ENCODE measurements at regions of chr9 and their contacts with region 1.

Region 1: GRCh38 chr9:104927912-104928740 is at the start of gene ABCA1:
- DNase-seq: peak; percentile 86
- H3K4me3 Mint-ChIP-seq: peak within 1 kb of the TSS; percentile 82
- H3K27ac Mint-ChIP-seq: peak within 1 kb of the TSS; percentile 49
- H3K4me1 Mint-ChIP-seq: peaks cover 9% of the 10 kb centered on the region
- H3K27me3 Mint-ChIP-seq: peaks cover 12% of the 10 kb centered on the region
- total RNA-seq, gene ABCA1: 6.1 TPM

Region 2: DNA sequence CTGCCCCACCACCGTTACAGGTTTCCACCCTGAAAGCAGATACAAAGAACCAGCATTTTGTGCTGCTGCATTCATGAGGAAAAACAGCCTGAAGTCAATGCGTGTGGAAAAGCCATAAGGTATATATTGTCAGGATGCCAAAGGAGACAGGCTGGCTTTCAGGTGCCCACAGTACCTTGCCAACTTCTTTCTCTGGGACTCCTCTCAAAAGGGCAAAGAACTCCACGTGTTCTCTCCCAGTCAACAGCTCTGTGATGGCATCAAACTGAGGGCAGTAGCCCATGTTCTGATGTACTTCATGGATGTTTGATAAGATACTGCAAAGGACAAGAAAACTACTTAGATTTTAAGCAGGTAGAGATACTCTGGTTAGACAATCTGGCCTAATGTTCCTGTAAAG is 139.9 kb before region 1 on chr9:
- CTCF ChIA-PET with region 1: no interaction called
- POLR2A ChIA-PET with region 1: no interaction called
- intact Hi-C with region 1: no loop called
- DNase-seq: no peak
- H3K4me3 Mint-ChIP-seq: no peak overlapping the region
- H3K27ac Mint-ChIP-seq: no peak overlapping the region
- H3K4me1 Mint-ChIP-seq: no peaks in the 10 kb centered on the region
- H3K27me3 Mint-ChIP-seq: no peaks in the 10 kb centered on the region

Region 3: GRCh38 chr9:104863180-104863883 is 64.8 kb before region 1 on chr9:
- CTCF ChIA-PET with region 1: interaction called, 3 read pairs
- POLR2A ChIA-PET with region 1: no interaction called
- intact Hi-C with region 1: loop called (anchors 10 kb)
- DNase-seq: peak; percentile 57
- H3K4me3 Mint-ChIP-seq: no peak overlapping the region
- H3K27ac Mint-ChIP-seq: no peak overlapping the region
- H3K4me1 Mint-ChIP-seq: peaks cover 3% of the 10 kb centered on the region
- H3K27me3 Mint-ChIP-seq: no peaks in the 10 kb centered on the region

Region 4: GRCh38 chr9:104961238-104961637 is 33.1 kb after region 1 on chr9:
- CTCF ChIA-PET with region 1: no interaction called
- POLR2A ChIA-PET with region 1: no interaction called
- intact Hi-C with region 1: loop called (anchors 1 kb)
- DNase-seq: peak; percentile 83
- H3K4me3 Mint-ChIP-seq: no peak overlapping the region
- H3K27ac Mint-ChIP-seq: peak overlapping the region; percentile 85
- H3K4me1 Mint-ChIP-seq: peaks cover 31% of the 10 kb centered on the region
- H3K27me3 Mint-ChIP-seq: no peaks in the 10 kb centered on the region

Region 5: GRCh38 chr9:105053209-105053652 is 125.1 kb after region 1 on chr9:
- CTCF ChIA-PET with region 1: interaction called, 5 read pairs
- POLR2A ChIA-PET with region 1: interaction called, 5 read pairs
- intact Hi-C with region 1: loop called (anchors 1 kb)
- DNase-seq: peak; percentile 83
- H3K4me3 Mint-ChIP-seq: no peak overlapping the region
- H3K27ac Mint-ChIP-seq: peak overlapping the region; percentile 43
- H3K4me1 Mint-ChIP-seq: peaks cover 36% of the 10 kb centered on the region
- H3K27me3 Mint-ChIP-seq: no peaks in the 10 kb centered on the region

Region 6: GRCh38 chr9:105157130-105157583 is 229.0 kb after region 1 on chr9:
- CTCF ChIA-PET with region 1: interaction called, 14 read pairs
- POLR2A ChIA-PET with region 1: interaction called, 3 read pairs
- intact Hi-C with region 1: loop called (anchors 1 kb)
- DNase-seq: peak; percentile 27
- H3K4me3 Mint-ChIP-seq: no peak overlapping the region
- H3K27ac Mint-ChIP-seq: no peak overlapping the region
- H3K4me1 Mint-ChIP-seq: peaks cover 11% of the 10 kb centered on the region
- H3K27me3 Mint-ChIP-seq: no peaks in the 10 kb centered on the region

Measured in activated CD4-positive, alpha-beta memory T cell treated with anti-CD3 and anti-CD28 coated beads for 36 hours (primary cell).